Activated CD8-positive, alpha-beta T cell treated with anti-CD3 and anti-CD28 coated beads, Interleukin-2, amount 10 ng/mL, durations not matched to agents 7 days and 5 days (primary cell): ENCODE measurements at regions of chr1 and their contacts with region 1.

Region 1: DNA sequence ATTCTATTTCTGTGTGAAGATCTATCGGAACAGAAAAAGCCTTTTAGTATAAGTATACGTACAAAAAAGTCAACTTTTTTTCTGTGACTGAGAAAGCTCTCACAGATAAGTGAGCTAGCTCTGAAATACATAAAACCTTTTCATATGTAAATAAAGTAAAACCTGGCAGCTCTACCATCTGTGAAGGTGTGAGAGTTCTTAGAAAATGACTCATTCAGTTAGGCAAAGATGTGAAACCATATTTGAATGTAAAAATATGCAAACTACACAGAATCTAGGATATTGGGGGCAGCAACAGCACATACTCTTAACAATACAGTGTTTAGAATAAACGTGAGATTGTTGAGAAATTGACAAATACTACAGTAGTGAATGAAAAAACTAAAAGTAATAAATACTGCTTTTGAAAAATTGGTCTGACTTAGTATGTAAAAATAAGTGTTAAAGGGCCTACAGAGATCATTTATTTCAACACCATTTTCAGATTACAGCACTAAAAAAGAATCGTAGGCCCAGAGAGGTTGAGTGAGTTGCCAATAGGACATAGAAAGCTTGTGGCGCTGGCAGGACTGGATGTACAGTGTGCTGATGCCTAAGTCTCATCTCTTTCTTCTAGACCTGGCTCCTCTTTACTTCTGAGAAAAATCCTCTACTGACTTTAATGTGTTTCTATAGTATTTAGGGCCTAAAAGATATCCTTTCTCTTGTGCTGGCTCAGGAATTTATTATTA is 19.8 kb downstream of the ATP6V1G3 start:
- DNase-seq: no peak
- ATAC-seq: peak; percentile 63
- H3K4me3 Mint-ChIP-seq: peak overlapping the region; percentile 71
- H3K27ac Mint-ChIP-seq: peak overlapping the region; percentile 77
- H3K4me1 Mint-ChIP-seq: peaks cover 57% of the 10 kb centered on the region
- H3K27me3 Mint-ChIP-seq: no peaks in the 10 kb centered on the region

Region 2: DNA sequence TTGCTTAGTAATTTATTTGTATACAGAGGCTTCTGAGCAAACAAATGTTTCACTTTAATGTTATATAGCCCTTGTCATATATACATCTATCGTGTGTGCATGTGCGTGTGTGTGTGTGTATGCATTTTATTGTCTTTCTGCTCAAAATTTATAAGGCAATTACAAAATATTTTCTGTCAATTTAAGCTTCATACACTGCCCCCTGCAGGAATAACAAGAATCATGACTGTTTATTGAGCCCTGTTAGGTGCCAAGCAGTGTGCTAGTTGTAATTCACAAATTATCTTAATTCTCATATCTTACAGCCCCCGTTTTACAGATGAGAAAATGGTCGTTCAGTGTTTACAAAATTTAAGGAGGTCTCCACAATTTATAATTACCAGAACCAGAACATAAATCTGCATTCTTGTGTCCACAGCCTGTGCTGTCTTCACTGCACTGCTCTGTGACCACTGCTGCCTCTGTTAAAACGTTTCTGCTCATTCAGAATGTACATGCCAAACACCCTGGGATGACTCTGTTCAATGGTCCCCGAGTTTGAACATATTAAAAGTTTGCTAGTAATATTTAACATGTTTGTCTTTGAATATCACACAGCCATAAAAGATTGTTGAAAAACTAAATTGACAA is 161.6 kb before region 1 on chr1:
- CTCF ChIA-PET with region 1: no interaction called
- POLR2A ChIA-PET with region 1: no interaction called
- DNase-seq: no peak
- ATAC-seq: no peak
- H3K4me3 Mint-ChIP-seq: no peak overlapping the region
- H3K27ac Mint-ChIP-seq: no peak overlapping the region
- H3K4me1 Mint-ChIP-seq: no peaks in the 10 kb centered on the region
- H3K27me3 Mint-ChIP-seq: peaks cover 2% of the 10 kb centered on the region

Region 3: DNA sequence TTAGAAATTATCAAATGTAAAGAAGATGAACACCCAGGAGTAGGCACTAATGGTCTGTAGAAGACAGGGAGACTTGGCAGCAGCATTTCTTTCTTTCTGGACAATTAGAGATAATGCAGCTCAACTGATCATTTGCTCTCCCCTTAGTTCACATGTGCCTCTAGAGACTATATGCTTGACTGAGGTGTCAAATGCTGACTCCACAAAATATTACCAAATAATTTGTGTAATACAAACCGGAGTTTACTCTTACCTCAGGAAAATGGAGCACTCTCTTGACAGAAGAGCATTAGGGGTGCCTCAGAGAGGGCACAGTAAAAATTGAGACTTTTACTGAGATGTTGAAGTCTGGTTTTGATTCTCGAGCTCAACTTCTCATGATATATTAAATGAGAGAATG is 112.0 kb before region 1 on chr1:
- CTCF ChIA-PET with region 1: no interaction called
- POLR2A ChIA-PET with region 1: no interaction called
- DNase-seq: no peak
- ATAC-seq: no peak
- H3K4me3 Mint-ChIP-seq: no peak overlapping the region
- H3K27ac Mint-ChIP-seq: no peak overlapping the region
- H3K4me1 Mint-ChIP-seq: no peaks in the 10 kb centered on the region
- H3K27me3 Mint-ChIP-seq: no peaks in the 10 kb centered on the region

Region 4: DNA sequence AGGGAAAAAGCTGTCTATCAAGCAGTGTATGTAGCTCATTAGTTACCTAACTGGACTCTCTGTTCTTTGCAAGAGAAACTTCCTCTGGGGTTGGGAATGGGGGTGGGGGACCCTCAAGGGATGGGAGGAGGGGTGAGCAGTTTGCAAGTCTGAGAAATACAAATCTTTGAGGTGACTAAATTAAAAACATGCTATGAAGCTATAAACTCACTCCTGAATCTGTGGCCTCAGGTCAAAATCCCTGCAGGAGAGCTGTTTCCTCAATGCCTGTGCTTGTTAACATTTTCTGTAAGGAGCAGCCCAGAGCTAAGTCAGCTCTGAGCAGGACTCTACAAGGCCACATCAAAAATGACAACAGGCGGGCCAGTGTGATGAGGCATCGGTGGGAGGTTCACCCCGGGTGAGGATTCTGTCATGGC is 85.3 kb after region 1 on chr1:
- CTCF ChIA-PET with region 1: interaction called, 11 read pairs
- POLR2A ChIA-PET with region 1: no interaction called
- DNase-seq: no peak
- ATAC-seq: no peak
- H3K4me3 Mint-ChIP-seq: no peak overlapping the region
- H3K27ac Mint-ChIP-seq: no peak overlapping the region
- H3K4me1 Mint-ChIP-seq: peaks cover 60% of the 10 kb centered on the region
- H3K27me3 Mint-ChIP-seq: no peaks in the 10 kb centered on the region